PC-9 (cell line): ENCODE measurements at regions of chr15 and their contacts with region 1.

Region 1: DNA sequence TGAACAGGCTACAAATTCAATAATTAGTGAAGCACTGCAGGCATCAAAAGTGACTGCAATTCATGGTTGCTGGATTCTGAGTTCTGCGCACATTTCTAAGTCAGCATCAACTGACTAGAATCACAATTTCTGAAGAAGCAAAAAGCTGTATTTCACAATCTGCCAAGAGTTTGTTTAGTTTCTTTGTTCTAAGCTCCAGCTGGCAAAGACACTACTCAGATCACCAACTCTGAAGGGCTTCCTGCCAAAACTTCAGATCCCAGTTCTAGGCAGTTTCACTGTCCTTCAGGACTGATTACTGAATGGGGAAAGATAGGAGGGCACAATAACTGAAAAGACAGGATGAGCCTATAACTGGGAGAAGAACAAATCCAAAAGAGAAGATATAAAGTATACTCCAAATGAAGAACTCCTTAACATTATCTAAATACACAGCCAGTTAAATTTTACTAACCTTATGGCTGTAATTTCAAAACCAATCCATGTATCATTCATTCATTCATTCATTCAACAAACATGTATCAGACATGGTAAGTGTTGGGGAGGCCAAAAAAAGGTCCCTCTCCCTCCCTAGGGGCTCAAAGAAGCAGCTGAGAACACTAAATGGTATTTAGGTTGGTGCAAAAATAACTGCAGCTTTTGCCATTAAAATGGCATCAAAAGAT is 17.1 kb downstream of the TJP1 start:
- DNase-seq: no peak
- H3K4me3 ChIP-seq: no peak overlapping the region
- H3K27ac ChIP-seq: no peak overlapping the region
- H3K4me1 ChIP-seq: 0 out of 2 replicates have a peak, but pooled peaks cover 10% of the 10 kb centered on the region
- H3K27me3 ChIP-seq: no peaks in the 10 kb centered on the region
- CTCF ChIP-seq: no peak

Region 2: GRCh38 chr15:29788433-29789034 is 16.6 kb before region 1 on chr15:
- CTCF ChIA-PET with region 1: no interaction called
- POLR2A ChIA-PET with region 1: no interaction called
- intact Hi-C with region 1: loop called (anchors 1 kb)
- DNase-seq: no peak
- H3K4me3 ChIP-seq: no peak overlapping the region
- H3K27ac ChIP-seq: no peak overlapping the region
- H3K4me1 ChIP-seq: no peaks in the 10 kb centered on the region
- H3K27me3 ChIP-seq: no peaks in the 10 kb centered on the region
- CTCF ChIP-seq: no peak